ENCODE measurements at regions of chr12 and their contacts with region 1.

Region 1: DNA sequence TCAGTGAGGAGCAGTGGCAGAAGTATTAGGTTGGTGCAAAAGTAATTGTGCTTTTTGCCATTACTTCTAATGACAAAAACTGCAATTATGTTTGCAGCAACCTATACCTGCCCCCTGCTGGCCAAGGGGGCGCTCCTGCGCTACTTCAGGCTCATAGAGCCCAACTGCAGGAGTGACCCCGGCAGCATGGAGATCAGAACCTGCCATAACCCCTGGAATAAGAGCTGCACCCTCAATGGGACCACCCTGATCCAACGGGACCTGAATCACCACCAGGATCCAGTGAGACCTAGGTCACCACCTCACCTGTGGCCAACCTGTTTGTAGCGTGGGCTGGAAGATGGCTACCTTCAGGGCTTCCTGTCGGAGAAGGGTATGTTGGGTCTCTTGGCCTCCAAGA is 8.2 kb upstream of the C12orf42 start:
- DNase-seq: peak; percentile 29 to 78 (median 53)
- ATAC-seq: peak; percentile 71
- H3K4me3 ChIP-seq: no peak overlapping the region
- H3K4me3 Mint-ChIP-seq: no peak overlapping the region
- H3K27ac ChIP-seq: no peak overlapping the region
- H3K27ac Mint-ChIP-seq: no peak overlapping the region
- H3K4me1 ChIP-seq: no peaks in the 10 kb centered on the region
- H3K4me1 Mint-ChIP-seq: no peaks in the 10 kb centered on the region
- H3K27me3 ChIP-seq: no peaks in the 10 kb centered on the region
- H3K27me3 Mint-ChIP-seq: peaks cover 5% of the 10 kb centered on the region
- CTCF ChIP-seq: peak; percentile 43

Region 2: GRCh38 chr12:102883204-102883799 is 620.7 kb before region 1 on chr12:
- CTCF ChIA-PET with region 1: no interaction called
- POLR2A ChIA-PET with region 1: no interaction called
- intact Hi-C with region 1: loop called in 1 of 2 experiments (anchors 2 kb)
- DNase-seq: peak in 12 of 14 experiments; percentile 7 to 43 (median 20)
- ATAC-seq: no peak
- H3K4me3 ChIP-seq: no peak overlapping the region
- H3K4me3 Mint-ChIP-seq: no peak overlapping the region
- H3K27ac ChIP-seq: no peak overlapping the region
- H3K27ac Mint-ChIP-seq: no peak overlapping the region
- H3K4me1 ChIP-seq: peaks cover 2% of the 10 kb centered on the region
- H3K4me1 Mint-ChIP-seq: no peaks in the 10 kb centered on the region
- H3K27me3 ChIP-seq: no peaks in the 10 kb centered on the region
- H3K27me3 Mint-ChIP-seq: peaks cover 38% of the 10 kb centered on the region
- CTCF ChIP-seq: peak; percentile 62

Region 3: DNA sequence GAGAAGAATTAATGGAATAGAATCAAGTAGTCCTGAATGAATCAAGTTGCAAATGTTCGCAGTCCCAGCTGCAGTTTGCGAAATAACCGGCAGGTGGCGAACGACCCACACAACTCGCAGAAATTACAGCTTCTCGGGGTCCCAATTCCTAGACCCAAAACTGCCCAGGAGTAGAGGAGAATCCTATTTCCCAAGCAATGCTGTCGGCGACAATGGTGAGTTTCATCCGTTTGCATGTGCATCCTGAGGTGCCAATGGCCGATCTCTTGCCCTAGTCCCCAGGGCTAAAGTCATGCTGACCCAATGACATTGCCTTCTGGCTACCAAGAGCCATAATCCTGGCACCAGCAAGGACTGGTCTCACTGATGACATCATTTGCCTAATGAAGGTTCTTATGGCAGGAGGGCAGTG is 555.0 kb before region 1 on chr12:
- CTCF ChIA-PET with region 1: interaction called, 6 read pairs
- POLR2A ChIA-PET with region 1: no interaction called
- intact Hi-C with region 1: loop called (anchors 1 kb)
- DNase-seq: peak in 13 of 14 experiments; percentile 15 to 64 (median 36)
- ATAC-seq: no peak
- H3K4me3 ChIP-seq: no peak overlapping the region
- H3K4me3 Mint-ChIP-seq: no peak overlapping the region
- H3K27ac ChIP-seq: no peak overlapping the region
- H3K27ac Mint-ChIP-seq: no peak overlapping the region
- H3K4me1 ChIP-seq: no peaks in the 10 kb centered on the region
- H3K4me1 Mint-ChIP-seq: no peaks in the 10 kb centered on the region
- H3K27me3 ChIP-seq: peaks cover 21 to 52% of the 10 kb centered on the region in 2 experiments
- H3K27me3 Mint-ChIP-seq: peaks cover 87% of the 10 kb centered on the region
- CTCF ChIP-seq: peak; percentile 84

Region 4: DNA sequence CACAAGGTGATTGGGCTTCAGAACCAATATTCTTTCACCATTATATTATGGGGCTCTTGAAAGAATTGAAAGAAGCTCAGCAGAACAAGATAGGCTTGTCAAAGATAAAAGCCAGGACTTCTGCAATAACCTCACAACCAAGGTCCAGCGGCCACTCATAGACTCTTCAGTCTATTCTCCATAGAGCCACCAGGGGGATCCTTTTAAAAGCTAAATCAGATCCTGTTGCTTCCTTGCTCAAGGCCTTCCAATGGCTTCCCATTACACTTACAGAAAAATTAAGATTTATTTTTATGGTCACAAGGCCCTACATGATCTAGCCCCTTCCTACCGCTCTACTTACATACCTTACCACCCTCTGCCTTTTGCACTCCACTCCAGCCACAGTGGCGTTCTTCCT is 177.8 kb before region 1 on chr12:
- CTCF ChIA-PET with region 1: no interaction called
- POLR2A ChIA-PET with region 1: no interaction called
- intact Hi-C with region 1: loop called in 1 of 2 experiments (anchors 5 kb)
- DNase-seq: peak in 2 of 14 experiments; percentile 1 to 9
- ATAC-seq: no peak
- H3K4me3 ChIP-seq: no peak overlapping the region
- H3K4me3 Mint-ChIP-seq: no peak overlapping the region
- H3K27ac ChIP-seq: no peak overlapping the region
- H3K27ac Mint-ChIP-seq: no peak overlapping the region
- H3K4me1 ChIP-seq: no peaks in the 10 kb centered on the region
- H3K4me1 Mint-ChIP-seq: no peaks in the 10 kb centered on the region
- H3K27me3 ChIP-seq: no peaks in the 10 kb centered on the region
- H3K27me3 Mint-ChIP-seq: no peaks in the 10 kb centered on the region
- CTCF ChIP-seq: no peak

Region 5: DNA sequence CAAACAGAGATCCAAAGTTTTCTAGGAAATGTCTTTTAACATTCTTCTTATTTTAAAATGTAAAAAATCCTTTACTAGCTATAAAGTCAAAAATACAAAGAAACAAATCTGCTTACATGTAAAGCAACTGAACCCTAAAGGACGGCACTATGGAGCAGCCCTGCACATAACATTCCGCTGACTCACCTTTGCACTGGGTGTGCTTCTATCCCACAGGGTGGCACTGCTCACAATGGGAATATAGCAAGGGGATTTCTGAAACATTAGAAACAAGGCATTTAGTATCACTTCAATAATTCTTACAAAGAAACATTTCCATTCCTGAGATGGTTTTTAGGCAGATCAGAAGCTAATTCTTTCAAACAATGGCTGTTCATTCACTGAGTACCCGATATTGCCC is 102.6 kb before region 1 on chr12:
- CTCF ChIA-PET with region 1: no interaction called
- POLR2A ChIA-PET with region 1: no interaction called
- intact Hi-C with region 1: loop called (anchors 1 to 2 kb)
- DNase-seq: peak in 5 of 14 experiments; percentile 5 to 31 (median 29)
- ATAC-seq: no peak
- H3K4me3 ChIP-seq: no peak overlapping the region
- H3K4me3 Mint-ChIP-seq: no peak overlapping the region
- H3K27ac ChIP-seq: no peak overlapping the region
- H3K27ac Mint-ChIP-seq: no peak overlapping the region
- H3K4me1 ChIP-seq: no peaks in the 10 kb centered on the region
- H3K4me1 Mint-ChIP-seq: no peaks in the 10 kb centered on the region
- H3K27me3 ChIP-seq: no peaks in the 10 kb centered on the region
- H3K27me3 Mint-ChIP-seq: no peaks in the 10 kb centered on the region
- CTCF ChIP-seq: no peak

Region 6: DNA sequence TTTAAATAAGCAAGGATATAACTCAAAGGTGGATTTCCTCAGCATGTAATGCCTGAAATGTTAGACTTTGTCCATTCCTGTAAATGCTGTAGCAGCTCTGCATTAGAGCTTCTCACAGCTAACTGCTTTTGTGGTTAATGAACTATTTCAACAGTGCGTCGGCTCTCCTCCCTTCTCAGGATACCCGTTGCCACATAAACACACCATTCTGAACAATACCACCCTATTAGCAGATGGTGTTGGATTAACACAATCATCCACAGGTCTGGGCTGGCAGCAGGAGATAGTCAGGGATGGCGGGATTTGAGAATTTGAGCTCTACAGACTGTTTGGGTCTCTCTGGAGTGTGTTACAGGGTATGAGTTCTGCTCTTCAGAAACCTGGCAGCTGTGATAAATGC is 25.3 kb after region 1 on chr12:
- CTCF ChIA-PET with region 1: no interaction called
- POLR2A ChIA-PET with region 1: no interaction called
- intact Hi-C with region 1: no loop called
- DNase-seq: no peak
- ATAC-seq: no peak
- H3K4me3 ChIP-seq: no peak overlapping the region
- H3K4me3 Mint-ChIP-seq: no peak overlapping the region
- H3K27ac ChIP-seq: no peak overlapping the region
- H3K27ac Mint-ChIP-seq: no peak overlapping the region
- H3K4me1 ChIP-seq: no peaks in the 10 kb centered on the region
- H3K4me1 Mint-ChIP-seq: no peaks in the 10 kb centered on the region
- H3K27me3 ChIP-seq: no peaks in the 10 kb centered on the region
- H3K27me3 Mint-ChIP-seq: peaks cover 6% of the 10 kb centered on the region
- CTCF ChIP-seq: no peak

Measured in CD4-positive, alpha-beta T cell (primary cell).